Activated CD4-positive, alpha-beta T cell treated with anti-CD3 and anti-CD28 coated beads, Interleukin-2, amount 10 ng/mL, durations not matched to agents 7 days and 5 days (primary cell): ENCODE measurements at regions of chr10 and their contacts with region 1.

Region 1: GRCh38 chr10:73879296-73880173 is 5.2 kb upstream of the CAMK2G start:
- DNase-seq: peak; percentile 95
- H3K4me3 Mint-ChIP-seq: no peak overlapping the region
- H3K27ac Mint-ChIP-seq: peak overlapping the region; percentile 76
- H3K4me1 Mint-ChIP-seq: peaks cover 42% of the 10 kb centered on the region
- H3K27me3 Mint-ChIP-seq: no peaks in the 10 kb centered on the region

Region 2: GRCh38 chr10:73591935-73592699 is 287.4 kb before region 1 on chr10:
- CTCF ChIA-PET with region 1: no interaction called
- POLR2A ChIA-PET with region 1: no interaction called
- DNase-seq: peak; percentile 30
- H3K4me3 Mint-ChIP-seq: peak overlapping the region; percentile 17
- H3K27ac Mint-ChIP-seq: peak overlapping the region; percentile 27
- H3K4me1 Mint-ChIP-seq: peaks cover 23% of the 10 kb centered on the region
- H3K27me3 Mint-ChIP-seq: no peaks in the 10 kb centered on the region

Region 3: GRCh38 chr10:73772280-73773151 is 107.0 kb before region 1 on chr10:
- CTCF ChIA-PET with region 1: interaction called, 18 read pairs
- POLR2A ChIA-PET with region 1: no interaction called
- DNase-seq: peak; percentile 79
- H3K4me3 Mint-ChIP-seq: peak overlapping the region; percentile 95
- H3K27ac Mint-ChIP-seq: peak overlapping the region; percentile 94
- H3K4me1 Mint-ChIP-seq: peaks cover 69% of the 10 kb centered on the region
- H3K27me3 Mint-ChIP-seq: no peaks in the 10 kb centered on the region

Region 4: GRCh38 chr10:73848821-73849489 is 30.6 kb before region 1 on chr10:
- CTCF ChIA-PET with region 1: interaction called, 212 read pairs
- POLR2A ChIA-PET with region 1: interaction called, 4 read pairs
- DNase-seq: peak; percentile 93
- H3K4me3 Mint-ChIP-seq: no peak overlapping the region
- H3K27ac Mint-ChIP-seq: peak overlapping the region; percentile 73
- H3K4me1 Mint-ChIP-seq: peaks cover 24% of the 10 kb centered on the region
- H3K27me3 Mint-ChIP-seq: no peaks in the 10 kb centered on the region

Region 5: DNA sequence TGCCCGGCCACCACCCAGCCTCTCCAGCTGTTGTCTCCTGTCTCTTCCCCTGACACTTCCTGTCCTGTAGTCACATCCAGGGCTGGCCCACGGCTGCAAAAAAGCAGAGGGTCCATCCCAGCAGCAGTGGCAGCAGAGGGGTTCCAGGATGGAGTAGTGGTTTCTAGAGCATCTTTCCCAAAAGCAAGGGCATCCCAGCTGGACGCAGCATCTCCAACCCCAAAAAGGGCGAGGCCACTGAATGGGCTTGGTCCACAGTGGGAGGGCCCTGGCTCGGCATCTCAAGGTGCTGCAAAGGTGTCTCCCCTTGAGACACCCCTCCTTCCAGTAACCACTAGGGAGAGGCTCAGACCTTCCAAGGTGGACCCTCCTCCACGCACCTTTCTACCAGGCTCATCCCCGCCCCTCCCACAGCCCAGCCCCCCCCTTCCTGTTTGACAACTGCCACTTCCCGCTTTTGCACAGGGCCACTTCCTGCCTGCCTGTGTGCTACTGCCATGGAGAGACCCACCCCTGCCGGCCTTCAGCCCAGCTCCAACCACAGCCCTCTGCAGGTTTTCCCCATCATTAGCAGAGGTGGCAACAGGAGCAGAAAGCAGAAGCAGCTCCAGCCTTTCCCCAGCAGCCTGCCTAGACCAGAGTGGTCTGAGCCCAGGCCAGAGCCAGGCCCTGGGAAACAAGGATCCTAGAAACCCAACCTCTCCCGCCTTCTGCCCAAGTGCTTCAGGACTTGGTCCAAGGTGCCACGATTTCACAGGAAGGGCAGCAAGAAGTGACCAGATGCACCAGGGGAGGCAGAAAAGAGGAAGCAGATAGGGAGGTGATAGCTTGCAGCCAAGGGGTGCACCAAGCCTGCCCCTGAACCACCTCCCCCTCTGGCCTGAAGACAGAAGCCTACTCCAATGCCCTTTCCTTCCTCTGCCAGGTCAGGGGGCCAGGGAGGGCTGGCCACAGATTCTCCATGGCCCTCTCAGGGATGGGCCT is 13.8 kb before region 1 on chr10:
- CTCF ChIA-PET with region 1: interaction called, 74 read pairs
- POLR2A ChIA-PET with region 1: no interaction called
- DNase-seq: peak; percentile 72
- H3K4me3 Mint-ChIP-seq: peak overlapping the region; percentile 76
- H3K27ac Mint-ChIP-seq: peak overlapping the region; percentile 96
- H3K4me1 Mint-ChIP-seq: peaks cover 89% of the 10 kb centered on the region
- H3K27me3 Mint-ChIP-seq: no peaks in the 10 kb centered on the region

Region 6: DNA sequence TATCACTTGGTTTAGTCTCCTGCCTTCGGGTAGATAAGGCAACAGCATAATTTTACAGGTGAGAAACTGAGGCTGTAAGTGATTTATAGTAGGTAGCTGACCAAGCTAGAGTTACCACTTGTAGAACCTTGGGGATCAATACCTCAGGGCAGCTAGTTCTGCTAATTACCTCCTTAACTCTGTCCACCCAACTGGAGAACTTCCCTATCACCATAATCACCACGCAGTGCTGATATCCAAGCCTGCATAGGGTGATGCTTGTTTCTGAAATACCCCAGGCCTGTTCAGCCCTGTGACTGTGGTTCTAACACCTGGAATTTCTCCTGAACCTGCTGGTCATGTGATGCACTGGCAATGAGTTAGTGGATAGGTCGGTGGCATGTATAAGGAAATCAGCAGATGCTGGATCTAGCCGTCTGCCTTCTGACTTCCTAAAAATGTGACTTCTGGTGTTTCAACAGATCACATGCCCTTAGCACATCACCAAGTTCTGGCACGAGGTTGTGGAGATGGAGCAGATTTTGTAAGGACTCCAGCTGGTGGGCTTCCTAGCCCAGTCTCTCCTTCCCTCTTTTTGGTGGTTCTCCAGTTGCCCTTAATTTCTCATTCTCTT is 46.7 kb after region 1 on chr10:
- CTCF ChIA-PET with region 1: interaction called, 17 read pairs
- POLR2A ChIA-PET with region 1: no interaction called
- DNase-seq: no peak
- H3K4me3 Mint-ChIP-seq: no peak overlapping the region
- H3K27ac Mint-ChIP-seq: no peak overlapping the region
- H3K4me1 Mint-ChIP-seq: peaks cover 17% of the 10 kb centered on the region
- H3K27me3 Mint-ChIP-seq: peaks cover 52% of the 10 kb centered on the region

Region 7: DNA sequence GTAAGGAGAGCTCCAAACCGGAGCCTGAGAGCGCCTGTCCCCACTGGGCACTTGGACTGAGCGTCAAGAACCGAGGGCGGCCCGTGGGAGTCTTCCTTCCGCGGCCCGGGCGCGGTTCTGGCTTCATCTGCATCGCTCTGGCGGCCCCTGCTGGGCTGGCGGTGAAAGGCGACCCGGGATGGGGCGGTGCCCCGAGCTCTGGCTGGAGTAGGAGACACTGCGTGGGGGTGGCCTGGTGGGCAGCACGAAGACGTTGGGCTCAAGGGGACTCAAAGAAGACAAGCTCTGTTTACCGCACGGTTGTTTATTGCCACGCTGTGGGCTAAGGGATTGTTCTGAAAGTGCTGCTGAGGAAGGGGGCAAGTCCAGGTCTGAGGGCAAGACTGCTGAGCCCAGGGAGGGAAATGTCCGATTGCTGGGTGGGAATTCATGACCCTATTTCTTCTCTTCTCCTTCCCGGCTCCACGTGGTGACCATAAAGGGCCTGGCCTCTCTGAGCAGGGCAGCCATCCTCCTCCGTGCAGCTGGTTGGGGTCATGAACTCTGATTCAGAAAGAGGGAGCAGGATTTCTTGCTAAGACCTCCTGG is 61.2 kb after region 1 on chr10:
- CTCF ChIA-PET with region 1: interaction called, 62 read pairs
- POLR2A ChIA-PET with region 1: interaction called, 3 read pairs
- DNase-seq: peak; percentile 84
- H3K4me3 Mint-ChIP-seq: peak overlapping the region; percentile 9
- H3K27ac Mint-ChIP-seq: peak overlapping the region; percentile 71
- H3K4me1 Mint-ChIP-seq: peaks cover 24% of the 10 kb centered on the region
- H3K27me3 Mint-ChIP-seq: peaks cover 15% of the 10 kb centered on the region

Region 8: DNA sequence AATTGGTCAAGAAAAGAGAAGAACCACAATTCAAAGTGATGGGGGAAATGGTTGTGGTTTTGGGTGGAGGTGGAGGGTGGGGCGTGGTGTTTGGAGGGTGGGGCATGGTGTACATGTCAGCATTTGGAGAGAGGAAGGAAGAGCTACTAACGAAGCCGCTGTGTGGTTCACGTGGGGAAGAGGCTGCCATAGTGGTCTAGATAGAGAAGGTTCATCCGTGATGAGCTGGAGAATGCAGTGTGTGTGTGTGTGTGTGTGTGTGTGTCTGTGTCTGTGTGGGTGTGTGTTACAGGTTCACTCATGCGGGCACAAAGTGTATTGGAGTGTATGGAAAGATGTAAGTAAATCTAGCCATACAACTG is 112.3 kb after region 1 on chr10:
- CTCF ChIA-PET with region 1: interaction called, 12 read pairs
- POLR2A ChIA-PET with region 1: no interaction called
- DNase-seq: peak; percentile 94
- H3K4me3 Mint-ChIP-seq: peak overlapping the region; percentile 8
- H3K27ac Mint-ChIP-seq: peak overlapping the region; percentile 83
- H3K4me1 Mint-ChIP-seq: peaks cover 53% of the 10 kb centered on the region
- H3K27me3 Mint-ChIP-seq: no peaks in the 10 kb centered on the region